GM12878 (cell line): ENCODE measurements at regions of chr5 and their contacts with region 1.

Region 1: DNA sequence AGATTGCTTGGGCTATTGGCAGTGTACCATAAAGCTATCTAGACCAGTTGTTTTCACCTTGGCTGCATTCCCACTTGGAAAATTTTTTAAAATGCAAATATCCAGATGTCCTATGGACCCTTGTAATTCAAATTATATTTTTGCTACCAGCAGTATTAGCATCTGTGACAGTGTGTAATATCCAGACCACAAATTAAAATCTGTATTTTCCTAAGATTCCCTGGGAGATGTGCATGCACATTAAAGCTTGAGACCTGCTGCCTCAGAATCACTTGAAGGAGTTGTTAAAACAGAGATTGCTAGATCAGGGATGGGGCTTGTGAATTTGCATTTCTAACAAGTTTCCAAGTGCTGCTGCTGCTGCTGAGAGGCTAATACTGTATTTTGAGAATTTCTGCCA is 381.2 kb upstream of the PDE4D start:
- DNase-seq: no peak
- ATAC-seq: no peak
- H3K4me3 ChIP-seq: no peak overlapping the region
- H3K27ac ChIP-seq: no peak overlapping the region
- H3K4me1 ChIP-seq: no peaks in the 10 kb centered on the region
- H3K27me3 ChIP-seq: no peaks in the 10 kb centered on the region
- CTCF ChIP-seq: no peak
- EP300 ChIP-seq: no peak
- POLR2A ChIP-seq: no peak
- RAD21 ChIP-seq: no peak

Region 2: DNA sequence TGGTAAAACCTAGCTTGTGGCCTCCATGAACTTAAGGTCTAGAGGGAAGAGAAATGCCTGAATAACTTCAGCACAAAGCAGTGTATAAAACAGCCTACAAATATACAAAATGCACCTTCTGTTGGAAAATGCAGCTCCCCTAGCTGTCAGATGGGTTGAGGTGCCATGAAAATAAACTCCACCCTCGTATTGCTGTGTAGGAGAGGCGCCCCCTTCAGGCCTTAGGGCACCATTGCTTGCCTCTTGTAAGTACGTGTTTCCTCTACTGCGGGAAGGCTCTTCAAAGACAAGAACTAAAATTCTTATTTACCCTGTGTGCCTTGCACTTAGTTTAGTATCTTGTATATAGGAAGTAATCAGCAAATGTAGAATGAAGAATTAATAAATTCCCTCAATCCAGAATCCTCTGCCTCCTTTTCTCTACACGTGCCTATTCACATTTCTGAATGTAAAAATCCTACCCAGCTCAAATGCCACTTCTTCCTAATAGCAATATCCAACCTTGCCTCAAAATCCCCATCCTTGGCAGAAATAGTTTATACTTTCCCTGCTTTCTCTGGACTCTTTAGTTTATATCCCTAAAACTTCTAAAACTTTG is 12.5 kb after region 1 on chr5:
- CTCF ChIA-PET with region 1: interaction called, 26 read pairs
- POLR2A ChIA-PET with region 1: interaction called, 5 read pairs
- RAD21 ChIA-PET with region 1: no interaction called
- SMC1A ChIA-PET with region 1: interaction called, 4 read pairs
- in situ Hi-C with region 1: no loop called
- intact Hi-C with region 1: no loop called
- DNase-seq: no peak
- ATAC-seq: peak; percentile 98
- H3K4me3 ChIP-seq: no peak overlapping the region
- H3K27ac ChIP-seq: no peak overlapping the region
- H3K4me1 ChIP-seq: no peaks in the 10 kb centered on the region
- H3K27me3 ChIP-seq: no peaks in the 10 kb centered on the region
- CTCF ChIP-seq: peak; percentile 70 to 82 (median 72)
- EP300 ChIP-seq: no peak
- POLR2A ChIP-seq: no peak
- RAD21 ChIP-seq: peak; percentile 64

Region 3: DNA sequence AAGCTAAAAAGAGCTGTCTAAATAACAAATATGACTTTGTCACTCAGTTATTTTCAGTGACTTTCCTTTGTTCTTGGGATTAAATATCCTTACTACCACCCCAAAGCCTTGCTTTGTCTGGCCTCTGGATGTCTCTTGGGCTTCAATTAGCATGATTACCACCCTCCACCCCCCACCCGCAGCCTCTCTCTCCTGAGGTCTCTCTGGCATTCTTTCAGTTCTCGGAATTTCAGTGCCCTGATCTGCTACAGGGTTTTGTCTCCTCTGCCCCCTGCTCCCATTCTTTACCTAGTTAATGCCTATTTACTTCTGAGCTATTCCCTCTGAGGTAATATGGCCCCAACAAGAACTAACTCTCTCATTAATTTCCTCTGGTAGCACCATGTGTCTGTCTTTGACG is 48.8 kb after region 1 on chr5:
- CTCF ChIA-PET with region 1: no interaction called
- POLR2A ChIA-PET with region 1: no interaction called
- RAD21 ChIA-PET with region 1: no interaction called
- SMC1A ChIA-PET with region 1: no interaction called
- in situ Hi-C with region 1: no loop called
- intact Hi-C with region 1: no loop called
- DNase-seq: no peak
- ATAC-seq: no peak
- H3K4me3 ChIP-seq: no peak overlapping the region
- H3K27ac ChIP-seq: no peak overlapping the region
- H3K4me1 ChIP-seq: no peaks in the 10 kb centered on the region
- H3K27me3 ChIP-seq: no peaks in the 10 kb centered on the region
- CTCF ChIP-seq: no peak
- EP300 ChIP-seq: no peak
- POLR2A ChIP-seq: no peak
- RAD21 ChIP-seq: no peak